ENCODE measurements at regions of chr17 and their contacts with region 1.

Region 1: DNA sequence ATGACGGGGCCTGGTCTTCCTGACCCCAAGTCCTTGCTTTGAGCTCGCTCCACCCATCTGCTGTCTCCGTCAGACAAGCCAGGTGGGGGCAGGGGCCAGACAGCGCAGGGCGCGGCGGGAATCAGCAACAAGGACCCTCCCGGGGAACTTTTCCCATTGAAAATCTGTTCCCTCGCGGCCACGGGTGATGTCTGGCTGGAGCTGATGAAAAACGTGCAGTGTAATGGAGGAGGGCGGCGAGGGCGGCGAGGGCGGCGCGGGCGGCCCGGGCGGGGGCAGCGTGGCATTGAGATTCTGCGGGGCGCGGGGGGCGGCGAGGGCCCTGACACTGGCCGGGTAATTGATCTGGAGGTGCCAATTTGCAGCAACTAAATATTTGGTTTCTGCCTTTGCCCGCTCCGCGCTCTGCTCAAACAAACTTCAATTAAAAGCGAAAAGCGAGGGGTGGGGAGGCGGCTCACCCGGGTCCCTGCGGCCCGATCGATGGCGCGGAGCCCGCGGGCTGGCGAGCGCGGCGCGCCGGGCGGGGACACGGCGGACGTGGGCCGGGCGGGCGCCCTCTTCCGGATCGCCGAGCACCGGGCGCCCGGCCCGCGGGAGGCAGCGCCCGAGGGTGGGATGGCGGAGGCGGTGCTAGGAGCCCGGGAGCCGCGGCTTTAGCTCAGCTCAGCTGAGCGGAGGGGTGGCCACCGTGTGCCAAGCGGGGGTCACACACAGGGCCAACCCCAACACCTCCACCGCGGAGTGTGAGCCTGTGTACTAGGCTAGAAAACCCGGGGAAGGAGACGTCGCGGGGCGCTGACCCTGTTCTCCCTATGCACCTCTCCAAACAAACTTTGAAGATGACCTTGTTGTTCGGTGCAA is 32.4 kb downstream of the DCAKD start:
- DNase-seq: peak in 36 of 42 donors; percentile 14 to 72 (median 43)

Region 2: DNA sequence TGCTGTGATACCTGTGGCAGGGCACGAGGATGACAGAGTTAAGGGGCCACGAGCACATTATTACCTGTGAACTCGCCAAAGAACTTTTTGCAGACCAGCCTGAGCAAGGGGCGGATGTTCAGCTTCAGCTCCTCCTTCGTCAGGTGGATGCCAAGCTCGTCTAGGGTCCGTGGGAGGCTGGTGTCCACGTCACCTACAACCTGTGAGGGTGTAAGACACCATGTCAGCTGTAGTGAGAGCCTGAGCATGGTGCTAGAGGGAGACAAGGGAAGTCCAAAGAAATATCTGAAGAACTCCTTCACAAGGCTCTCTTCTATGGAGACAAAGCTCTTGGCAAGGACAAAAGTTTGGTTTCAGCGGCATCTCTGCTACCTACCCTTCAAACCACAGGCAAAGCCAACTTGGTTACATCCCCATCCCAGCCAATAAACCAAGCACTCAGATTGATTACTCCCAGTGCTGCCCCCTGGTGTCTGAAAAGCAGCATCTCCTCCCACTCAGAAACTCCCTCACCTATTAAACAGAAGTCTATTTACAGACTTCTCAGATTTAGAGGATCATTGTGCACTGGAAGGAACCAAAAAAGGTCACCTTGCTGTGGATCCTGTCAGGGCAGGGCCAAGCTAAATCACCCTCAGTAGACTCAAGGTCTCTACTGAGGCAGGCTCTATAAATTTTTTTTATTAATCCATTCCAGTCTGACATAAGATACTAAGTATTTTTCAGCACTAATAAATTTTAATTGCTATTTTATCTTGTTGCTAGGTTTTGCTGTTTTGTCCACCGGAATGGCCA is 154.0 kb before region 1 on chr17:
- intact Hi-C with region 1: no loop called
- DNase-seq: peak; percentile 29 to 90 (median 72)

Region 3: GRCh38 chr17:44899069-44899782 is 119.9 kb before region 1 on chr17 and contains the start of gene EFTUD2:
- intact Hi-C with region 1: no loop called
- DNase-seq: peak; percentile 82 to 97 (median 92)

Region 4: GRCh38 chr17:44919885-44920564 is 99.1 kb before region 1 on chr17:
- intact Hi-C with region 1: loop called (anchors 5 kb)
- DNase-seq: peak; percentile 61 to 90 (median 78)

Measured in head of caudate nucleus (tissue), 42 donors.